ENCODE measurements at regions of chr15 and their contacts with region 1.

Region 1: GRCh38 chr15:64681424-64682024 is 93.9 kb downstream of the RBPMS2 start:
- DNase-seq: no peak
- ATAC-seq: peak; percentile 70 to 78

Region 2: GRCh38 chr15:64430000-64430735 is 251.4 kb before region 1 on chr15:
- intact Hi-C with region 1: loop called in 1 of 2 experiments (anchors 10 kb)
- DNase-seq: peak; percentile 27
- ATAC-seq: peak; percentile 80 to 84

Region 3: DNA sequence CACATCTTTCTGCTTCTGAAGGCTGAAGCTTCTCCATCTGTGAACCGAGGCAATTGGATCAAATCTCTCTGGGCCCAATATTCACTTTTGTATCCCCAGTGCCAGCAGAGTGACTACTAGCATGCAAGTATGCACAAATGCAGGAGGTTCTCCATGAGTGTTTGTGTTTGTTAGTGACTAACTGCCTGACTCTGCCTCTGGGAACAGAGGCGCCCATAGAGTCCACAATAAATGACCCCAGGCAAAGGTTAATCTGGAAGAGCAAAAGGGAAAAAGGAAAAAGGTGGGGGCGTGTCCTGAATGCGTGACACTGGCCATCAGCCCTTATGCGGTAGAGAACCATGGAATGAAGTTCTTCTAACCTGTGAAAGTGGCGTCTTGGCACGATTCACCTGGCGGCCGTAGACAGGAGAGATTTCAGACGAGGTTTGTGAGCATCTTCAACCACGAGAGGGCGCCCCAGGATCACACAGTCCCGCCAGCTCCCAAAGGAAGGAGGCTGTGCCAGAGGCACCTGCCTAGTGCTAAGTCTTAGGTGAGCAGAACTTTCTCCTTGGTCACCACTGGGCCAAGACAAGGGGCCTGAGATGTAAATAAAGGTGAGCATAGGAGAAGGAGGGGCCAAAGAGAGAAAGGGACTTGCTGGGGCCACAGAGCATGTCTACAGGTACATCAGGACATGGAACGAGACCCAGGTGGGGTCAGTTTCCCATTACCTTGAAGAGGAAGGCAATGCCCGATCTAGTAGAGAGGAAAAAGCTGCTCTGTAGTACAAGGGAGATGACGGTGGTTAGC is 49.7 kb after region 1 on chr15:
- intact Hi-C with region 1: loop called (anchors 1 to 2 kb)
- DNase-seq: peak; percentile 88
- ATAC-seq: peak; percentile 72 to 74

Region 4: DNA sequence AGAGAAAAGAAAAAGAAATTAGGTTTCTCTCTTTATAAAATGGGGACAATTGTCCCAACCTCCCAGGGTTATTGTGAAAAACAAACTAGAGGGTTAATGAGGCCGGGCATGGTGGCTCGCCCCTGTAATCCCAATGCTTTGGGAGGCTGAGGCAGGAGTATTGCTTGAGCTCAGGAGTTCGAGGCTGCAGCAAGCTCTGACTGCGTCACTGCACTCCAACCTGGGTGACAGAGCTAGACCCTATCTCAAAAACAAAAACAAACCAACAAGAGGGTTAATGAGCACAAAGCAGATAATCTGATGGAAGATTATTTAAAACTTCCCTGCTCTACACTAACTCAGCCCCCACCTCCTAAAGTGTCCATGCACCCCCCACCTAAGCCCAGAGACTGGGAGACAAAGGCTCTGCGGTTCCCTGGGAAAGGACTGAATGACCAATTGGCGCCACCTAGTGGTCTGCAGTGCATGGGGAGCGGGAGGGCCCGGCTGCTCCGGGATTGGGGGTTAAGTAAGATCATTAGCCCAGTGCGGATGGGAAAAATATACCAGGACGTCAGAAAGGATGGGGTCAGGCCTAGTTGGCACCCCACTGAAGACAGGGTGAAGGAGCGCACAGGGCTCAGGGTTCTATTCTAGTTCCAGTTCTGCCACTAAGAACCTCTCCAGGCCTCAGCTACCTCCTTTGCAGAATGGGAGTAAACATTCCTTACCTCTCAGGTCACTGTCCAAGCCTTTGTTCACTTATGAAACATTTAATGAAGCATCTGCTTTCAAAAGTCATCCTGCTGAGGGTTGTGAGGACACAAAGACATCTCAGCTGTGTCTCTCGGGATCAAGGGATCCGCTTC is 128.3 kb after region 1 on chr15:
- intact Hi-C with region 1: loop called in 1 of 2 experiments (anchors 5 kb)
- DNase-seq: peak; percentile 87
- ATAC-seq: peak; percentile 82 to 85

Region 5: GRCh38 chr15:64905119-64905831 is 223.8 kb after region 1 on chr15:
- intact Hi-C with region 1: loop called in 1 of 2 experiments (anchors 10 kb)
- DNase-seq: peak; percentile 81
- ATAC-seq: peak; percentile 92 to 94